CD4-positive, alpha-beta memory T cell (primary cell): ENCODE measurements at regions of chr14 and their contacts with region 1.

Region 1: DNA sequence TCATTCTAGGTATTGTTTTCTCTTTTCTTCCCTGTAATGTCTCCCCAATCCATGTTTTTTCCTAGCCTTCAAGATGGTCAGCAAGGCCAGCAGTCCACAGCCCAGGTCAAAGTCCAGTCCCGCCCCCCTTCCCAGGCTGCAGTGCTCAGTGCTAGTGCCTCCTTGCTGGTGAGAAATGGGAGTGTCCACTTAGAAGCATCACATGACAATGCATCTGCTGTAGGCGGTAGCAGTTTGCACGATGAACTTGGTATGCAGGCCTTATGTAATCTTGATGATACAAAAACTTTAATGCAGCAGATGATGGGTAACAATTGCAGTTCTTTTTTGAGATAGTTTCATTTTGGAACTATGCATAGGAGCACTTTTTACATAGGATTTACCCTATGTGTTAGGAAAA is 88.4 kb downstream of the PCNX1 start:
- DNase-seq: no peak
- H3K4me3 ChIP-seq: no peak overlapping the region
- H3K4me3 Mint-ChIP-seq: peak overlapping the region in 7 of 8 donors; percentile 27 to 85 (median 69)
- H3K27ac ChIP-seq: no peak overlapping the region
- H3K27ac Mint-ChIP-seq: peak overlapping the region; percentile 45 to 91 (median 78)
- H3K4me1 ChIP-seq: peaks cover 73% of the 10 kb centered on the region
- H3K4me1 Mint-ChIP-seq: peaks cover 36 to 78% (median 57%) of the 10 kb centered on the region in 4 donors
- H3K27me3 ChIP-seq: no peaks in the 10 kb centered on the region
- H3K27me3 Mint-ChIP-seq: no peaks in the 10 kb centered on the region

Region 2: DNA sequence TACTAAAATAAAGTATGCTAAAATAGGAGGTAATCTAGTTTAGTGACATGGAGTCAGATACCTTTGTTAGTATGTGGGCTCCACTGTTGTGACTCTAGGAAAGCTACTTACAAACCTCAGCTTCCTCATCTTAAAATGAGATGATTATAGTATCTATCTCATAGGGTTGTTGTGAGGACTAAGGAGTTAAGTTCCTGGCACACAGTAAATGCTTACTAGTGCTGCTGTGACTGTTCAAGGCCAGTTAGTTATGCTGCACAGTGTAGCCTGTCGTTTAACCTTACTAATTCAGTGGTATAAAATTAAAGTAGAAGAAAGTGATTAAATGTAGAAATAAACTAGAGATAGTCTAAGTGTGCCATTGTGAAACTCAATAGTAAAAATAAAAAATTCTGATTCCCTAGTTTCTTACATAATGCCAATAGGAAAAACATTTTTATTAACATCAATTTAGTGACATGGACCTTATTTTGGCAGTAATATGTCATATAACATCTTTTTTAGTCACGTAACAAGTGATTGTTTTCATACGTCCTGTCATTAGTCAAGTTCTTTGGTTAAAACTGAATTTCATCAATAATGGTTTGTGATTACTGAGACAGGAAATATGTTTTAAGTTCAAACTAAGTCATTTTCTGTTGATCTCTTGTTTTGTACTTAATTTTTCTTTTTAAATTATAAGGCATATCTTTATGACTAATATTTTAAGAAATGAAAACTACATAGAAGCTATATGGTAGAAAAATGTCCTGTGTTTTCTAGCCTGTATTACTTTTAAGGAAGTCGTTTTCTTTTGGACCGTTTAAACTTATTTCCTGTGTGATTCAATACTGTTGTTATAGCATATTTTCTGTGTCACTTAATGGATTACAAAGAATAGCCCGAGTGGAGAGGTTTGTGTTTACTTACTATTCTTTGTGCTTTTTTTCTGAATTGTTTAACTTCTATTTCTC is 14.4 kb before region 1 on chr14:
- CTCF ChIA-PET with region 1: interaction called, 10 read pairs
- POLR2A ChIA-PET with region 1: interaction called, 34 read pairs
- intact Hi-C with region 1: loop called (anchors 2 kb)
- DNase-seq: peak in 1 of 5 donors; percentile 20
- H3K4me3 ChIP-seq: no peak overlapping the region
- H3K4me3 Mint-ChIP-seq: peak overlapping the region; percentile 59 to 90 (median 74)
- H3K27ac ChIP-seq: peak overlapping the region; percentile 47
- H3K27ac Mint-ChIP-seq: peak overlapping the region; percentile 53 to 90 (median 81)
- H3K4me1 ChIP-seq: peaks cover 62% of the 10 kb centered on the region
- H3K4me1 Mint-ChIP-seq: peaks cover 49 to 77% (median 59%) of the 10 kb centered on the region in 4 donors
- H3K27me3 ChIP-seq: no peaks in the 10 kb centered on the region
- H3K27me3 Mint-ChIP-seq: no peaks in the 10 kb centered on the region

Region 3: DNA sequence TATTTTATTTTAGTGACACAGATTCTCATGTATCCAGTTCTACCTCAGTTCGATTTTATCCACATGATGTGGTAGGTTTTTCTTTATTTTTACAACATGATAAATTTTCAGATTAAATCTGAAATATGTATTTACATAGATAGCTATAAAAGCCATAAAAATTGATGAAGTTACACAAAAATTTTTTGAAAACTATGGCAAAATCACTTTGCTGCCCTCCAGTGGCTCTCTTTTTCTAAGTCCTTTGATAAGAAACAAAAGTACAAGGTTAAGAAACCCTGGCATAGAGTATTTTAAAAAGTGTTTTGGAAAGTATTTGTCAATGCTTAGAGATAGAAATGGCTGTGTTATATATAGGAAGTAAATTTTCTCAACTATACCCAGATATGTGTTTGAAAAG is 15.8 kb after region 1 on chr14:
- CTCF ChIA-PET with region 1: interaction called, 15 read pairs
- POLR2A ChIA-PET with region 1: interaction called, 13 read pairs
- intact Hi-C with region 1: no loop called
- DNase-seq: peak in 4 of 5 donors; percentile 9 to 25 (median 22)
- H3K4me3 ChIP-seq: no peak overlapping the region
- H3K4me3 Mint-ChIP-seq: peak overlapping the region in 3 of 8 donors; percentile 15 to 55 (median 36)
- H3K27ac ChIP-seq: no peak overlapping the region
- H3K27ac Mint-ChIP-seq: peak overlapping the region in 6 of 7 donors; percentile 38 to 81 (median 70)
- H3K4me1 ChIP-seq: peaks cover 31% of the 10 kb centered on the region
- H3K4me1 Mint-ChIP-seq: peaks cover 35 to 69% (median 49%) of the 10 kb centered on the region in 4 donors
- H3K27me3 ChIP-seq: no peaks in the 10 kb centered on the region
- H3K27me3 Mint-ChIP-seq: no peaks in the 10 kb centered on the region

Region 4: DNA sequence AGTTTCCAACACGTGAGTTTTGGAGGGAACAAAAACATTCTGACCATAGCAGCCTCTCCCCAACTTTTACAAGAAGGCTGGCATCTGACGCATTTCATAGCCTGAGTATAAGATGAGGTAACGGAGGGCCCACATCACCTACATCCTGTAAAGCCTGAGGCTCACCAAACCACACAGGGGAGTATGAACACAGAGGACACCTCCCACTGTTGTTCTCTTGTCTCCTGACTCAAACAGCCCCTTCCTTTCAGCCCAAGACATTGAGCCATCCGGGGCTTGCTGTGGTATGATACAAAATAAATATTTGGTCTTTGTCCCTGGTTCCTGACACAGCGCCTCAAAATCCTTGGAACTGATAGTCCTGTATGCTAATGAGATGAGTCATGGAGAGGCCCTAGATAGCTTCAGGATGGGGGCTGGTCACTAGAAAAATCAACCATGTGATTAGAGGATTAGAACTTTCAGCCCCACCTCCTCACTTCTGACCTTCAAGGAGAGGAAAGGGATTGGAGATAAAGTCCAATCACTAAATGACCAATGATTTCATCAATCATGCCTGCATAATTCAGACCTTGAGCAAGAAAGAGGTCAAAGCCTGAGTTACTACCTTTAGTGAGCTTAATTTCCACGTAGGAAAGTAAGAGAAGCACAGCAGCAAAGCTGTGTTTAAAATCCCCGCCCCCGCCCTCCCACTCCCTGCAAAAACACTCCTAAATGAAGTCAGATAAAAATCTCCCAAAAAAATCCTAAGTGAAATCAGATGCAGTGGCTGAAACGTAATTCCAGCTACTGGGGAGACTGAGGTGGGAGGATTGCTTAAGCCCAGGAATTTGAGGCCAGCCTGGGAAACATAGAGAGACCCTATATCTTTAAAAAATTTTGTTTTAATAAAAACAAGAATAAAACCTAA is 148.0 kb after region 1 on chr14:
- CTCF ChIA-PET with region 1: no interaction called
- POLR2A ChIA-PET with region 1: no interaction called
- intact Hi-C with region 1: no loop called
- DNase-seq: peak; percentile 38 to 75 (median 61)
- H3K4me3 ChIP-seq: no peak overlapping the region
- H3K4me3 Mint-ChIP-seq: peak overlapping the region in 4 of 8 donors; percentile 39 to 67 (median 54)
- H3K27ac ChIP-seq: no peak overlapping the region
- H3K27ac Mint-ChIP-seq: peak overlapping the region; percentile 73 to 94 (median 90)
- H3K4me1 ChIP-seq: peaks cover 26% of the 10 kb centered on the region
- H3K4me1 Mint-ChIP-seq: peaks cover 14 to 24% (median 22%) of the 10 kb centered on the region in 4 donors
- H3K27me3 ChIP-seq: no peaks in the 10 kb centered on the region
- H3K27me3 Mint-ChIP-seq: peaks cover 0 to 3% of the 10 kb centered on the region in 2 donors